ENCODE measurements at regions of chr17 and their contacts with region 1.

Region 1: DNA sequence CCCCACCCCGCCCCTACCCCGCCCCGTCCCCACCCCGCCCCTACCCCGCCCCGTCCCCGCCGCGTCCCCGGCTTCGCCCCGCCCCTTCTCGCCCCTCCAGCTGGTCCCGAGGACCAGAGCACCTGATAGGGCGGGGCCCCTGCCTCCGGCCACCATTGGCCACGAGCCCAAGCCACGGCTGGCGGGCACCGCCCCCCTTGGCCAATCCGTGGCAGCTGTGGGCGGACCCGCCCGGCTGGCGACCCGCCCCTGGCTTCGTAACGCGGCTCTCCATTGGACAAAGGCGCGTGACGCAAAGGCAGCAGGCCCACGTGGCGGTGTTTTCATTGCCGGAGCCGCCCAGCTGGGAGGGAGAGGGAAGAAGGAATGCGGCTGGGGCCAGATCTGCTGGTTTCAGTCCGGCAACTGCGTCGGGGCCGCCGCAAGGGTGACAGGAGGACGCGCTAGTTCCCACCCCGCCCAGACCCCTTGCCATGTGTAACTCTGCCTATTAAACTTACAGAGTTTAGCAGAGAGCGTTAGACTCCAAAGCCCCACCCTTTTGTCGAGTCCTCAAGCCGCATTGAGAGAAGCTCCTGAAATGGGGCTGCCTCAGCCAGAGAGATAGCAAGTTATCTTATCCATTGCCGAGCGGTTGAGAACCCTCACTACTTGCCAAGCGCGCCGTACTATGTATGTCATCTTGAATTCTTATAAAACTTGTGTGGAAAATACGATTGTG is 403 bp upstream of the WIPI1 start:
- DNase-seq: peak; percentile 97 to 100 (median 99)

Region 2: DNA sequence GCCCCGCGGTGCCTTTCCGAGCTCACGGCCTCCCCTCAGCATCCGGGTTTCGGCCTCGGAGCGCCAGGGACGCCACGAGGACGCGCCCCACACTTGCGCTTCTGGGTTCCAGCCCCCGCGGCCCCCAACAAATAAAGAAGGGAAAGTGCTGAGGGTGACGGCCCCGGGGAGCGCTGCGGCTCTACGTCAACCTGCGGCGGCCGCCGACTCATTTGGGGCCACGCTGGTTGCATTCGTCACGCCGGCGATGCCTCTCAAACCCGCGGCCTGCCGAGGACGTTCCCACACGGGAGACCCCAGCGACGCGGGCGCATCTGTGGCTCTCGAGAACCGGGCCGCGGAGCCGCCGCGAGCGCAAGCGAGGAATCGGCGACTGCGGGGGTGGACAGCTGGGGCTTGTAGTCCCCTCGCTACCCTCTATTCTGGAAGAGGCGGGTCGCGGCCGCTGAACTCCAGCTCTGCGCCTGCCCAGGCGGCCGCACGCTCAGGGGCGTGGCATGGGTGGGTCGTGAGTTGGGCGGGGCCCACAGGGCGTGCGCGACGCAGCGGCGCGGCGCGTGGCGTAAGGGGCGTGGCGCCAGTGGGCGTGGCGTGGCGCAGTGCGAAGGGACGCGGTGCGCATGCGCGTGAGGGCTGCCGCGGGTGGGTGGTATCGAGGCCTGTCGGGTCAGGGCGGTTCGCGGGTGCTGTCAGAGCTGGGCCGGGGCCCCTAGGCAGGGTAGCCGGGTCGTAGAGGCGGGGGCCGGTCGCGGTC is 210.1 kb before region 1 on chr17 and contains the start of gene AMZ2:
- intact Hi-C with region 1: loop called (anchors 2 kb)
- DNase-seq: peak; percentile 90 to 99 (median 94)

Region 3: GRCh38 chr17:68260051-68260762 is 197.5 kb before region 1 on chr17:
- intact Hi-C with region 1: loop called (anchors 2 kb)
- DNase-seq: no peak

Region 4: GRCh38 chr17:68377862-68378770 is 79.6 kb before region 1 on chr17:
- intact Hi-C with region 1: no loop called
- DNase-seq: peak in 9 of 10 donors; percentile 13 to 81 (median 34)

Region 5: DNA sequence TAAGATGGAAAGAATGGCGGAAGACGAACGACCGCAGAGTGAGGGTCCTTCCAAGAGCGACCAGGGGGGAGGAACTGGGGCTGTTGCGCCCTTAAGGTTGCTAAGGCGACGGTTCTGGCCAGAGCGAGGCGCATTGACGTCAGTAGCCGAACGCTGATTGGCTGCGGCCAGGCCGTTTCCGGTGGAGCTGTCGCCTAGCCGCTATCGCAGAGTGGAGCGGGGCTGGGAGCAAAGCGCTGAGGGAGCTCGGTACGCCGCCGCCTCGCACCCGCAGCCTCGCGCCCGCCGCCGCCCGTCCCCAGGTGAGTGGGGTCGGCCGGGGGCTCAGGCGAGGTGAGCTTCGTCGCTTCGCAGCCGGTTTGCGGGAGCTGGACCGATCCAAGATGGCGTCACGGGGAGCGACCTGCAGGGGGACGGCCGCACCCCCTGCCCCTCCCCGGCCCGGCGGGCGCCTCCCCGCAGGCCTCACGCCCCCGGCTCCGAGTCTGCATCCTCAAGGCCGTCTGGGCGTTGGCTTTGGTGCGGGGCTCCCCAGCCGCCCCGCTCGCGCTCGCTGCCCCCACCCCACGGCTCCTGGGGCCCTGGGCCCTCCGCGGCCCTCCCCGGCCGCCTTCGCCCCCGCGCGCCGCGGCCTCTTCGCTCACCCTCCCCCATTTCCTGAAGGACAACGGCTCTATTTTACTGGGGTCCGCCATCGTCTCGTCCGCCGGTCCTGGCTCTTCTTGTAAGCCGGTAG is 54.7 kb after region 1 on chr17 and contains the start of gene PRKAR1A:
- intact Hi-C with region 1: loop called (anchors 5 kb)
- DNase-seq: peak; percentile 95 to 100 (median 99)